Activated CD4-positive, alpha-beta memory T cell treated with anti-CD3 and anti-CD28 coated beads, Interleukin-2, amount 10 ng/mL, durations not matched to agents 7 days and 5 days (primary cell): ENCODE measurements at regions of chr17 and their contacts with region 1.

Region 1: DNA sequence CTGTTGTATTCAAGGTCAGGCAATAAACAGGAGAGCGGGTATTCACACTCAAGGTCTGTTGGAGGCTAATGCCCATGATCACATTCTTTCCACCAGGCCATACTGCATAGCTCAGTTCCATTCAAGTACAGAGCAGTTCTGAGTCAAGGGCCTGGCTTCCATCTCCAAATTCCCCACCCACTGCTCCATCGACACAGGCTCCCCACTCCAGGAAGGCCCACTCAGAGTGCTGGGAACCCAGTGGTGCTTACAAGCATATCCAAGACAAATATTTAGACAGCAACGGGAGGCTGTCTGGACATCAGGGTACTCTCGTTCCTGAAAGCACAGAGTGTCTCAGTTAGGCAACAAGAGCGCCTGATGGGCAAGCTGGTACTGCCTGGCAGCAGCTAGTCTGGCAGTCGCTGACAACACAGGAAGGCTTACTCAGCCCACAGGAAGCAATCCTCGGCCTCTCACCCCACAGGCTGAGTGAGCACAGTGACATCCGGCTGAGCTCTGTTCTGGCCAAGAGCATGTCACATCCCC is 40.9 kb downstream of the RFFL start:
- DNase-seq: peak; percentile 86
- H3K4me3 Mint-ChIP-seq: peak overlapping the region; percentile 70
- H3K27ac Mint-ChIP-seq: peak overlapping the region; percentile 98
- H3K4me1 Mint-ChIP-seq: peaks cover 60% of the 10 kb centered on the region
- H3K27me3 Mint-ChIP-seq: no peaks in the 10 kb centered on the region

Region 2: DNA sequence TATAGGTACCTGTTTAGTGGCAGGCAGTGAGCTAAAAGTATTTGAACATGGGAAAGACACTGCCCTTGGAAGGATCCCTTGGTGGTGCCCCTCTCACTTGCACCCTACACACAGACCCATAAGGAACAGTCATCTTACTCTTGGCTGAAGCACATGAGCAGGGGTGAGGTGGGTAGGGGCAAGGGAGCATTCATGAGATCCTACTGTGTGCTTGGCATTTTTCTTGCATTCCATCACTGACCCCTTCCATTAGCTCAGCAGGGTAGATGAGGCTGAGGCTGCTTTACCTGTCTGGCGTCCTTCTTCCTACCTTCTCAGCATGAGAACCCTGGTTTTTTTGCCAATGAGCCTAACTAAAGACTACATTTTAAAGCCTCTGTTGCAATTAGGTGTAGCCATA is 109.6 kb before region 1 on chr17:
- CTCF ChIA-PET with region 1: no interaction called
- POLR2A ChIA-PET with region 1: no interaction called
- DNase-seq: no peak
- H3K4me3 Mint-ChIP-seq: no peak overlapping the region
- H3K27ac Mint-ChIP-seq: no peak overlapping the region
- H3K4me1 Mint-ChIP-seq: no peaks in the 10 kb centered on the region
- H3K27me3 Mint-ChIP-seq: peaks cover 2% of the 10 kb centered on the region

Region 3: DNA sequence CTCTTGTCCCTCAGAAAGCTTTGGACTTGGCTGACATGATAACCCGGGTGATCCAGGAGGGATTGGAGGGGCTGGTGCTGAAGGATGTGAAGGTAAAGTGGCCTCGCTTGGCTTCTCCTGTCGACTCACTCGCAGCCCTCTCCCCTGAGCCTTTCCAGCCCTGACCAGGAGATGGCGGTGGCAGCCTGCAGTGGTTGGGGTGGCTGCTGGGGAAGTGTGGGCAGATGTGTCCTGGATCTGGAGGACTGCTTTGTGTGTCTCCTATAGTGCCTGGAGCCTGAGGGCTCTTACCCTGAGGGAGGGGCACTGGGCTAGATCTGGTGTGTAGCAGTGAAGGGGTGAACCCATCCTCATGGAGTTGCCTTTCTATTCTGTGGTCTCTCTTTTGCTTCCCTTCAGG is 24.4 kb before region 1 on chr17:
- CTCF ChIA-PET with region 1: interaction called, 17 read pairs
- POLR2A ChIA-PET with region 1: interaction called, 13 read pairs
- DNase-seq: peak; percentile 87
- H3K4me3 Mint-ChIP-seq: no peak overlapping the region
- H3K27ac Mint-ChIP-seq: peak overlapping the region; percentile 65
- H3K4me1 Mint-ChIP-seq: peaks cover 9% of the 10 kb centered on the region
- H3K27me3 Mint-ChIP-seq: no peaks in the 10 kb centered on the region

Region 4: DNA sequence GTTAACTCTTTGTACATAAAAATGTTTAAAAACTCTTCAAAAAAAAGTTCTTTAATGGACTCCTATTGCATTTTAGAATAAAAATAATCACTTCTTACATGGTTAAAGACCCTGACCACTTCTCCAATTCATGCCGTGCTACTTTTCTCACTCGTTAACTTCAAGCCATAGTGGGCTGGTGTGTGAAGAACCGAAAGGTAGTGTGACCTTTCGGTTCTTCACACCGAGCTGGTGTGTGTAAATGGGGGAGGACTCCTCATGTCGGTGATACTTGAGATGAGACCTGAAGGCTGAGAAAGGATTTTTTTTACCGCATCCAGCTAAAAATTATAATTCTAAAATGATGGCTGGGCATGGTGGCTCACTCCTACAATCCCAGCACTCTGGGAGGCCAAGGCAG is 18.8 kb after region 1 on chr17:
- CTCF ChIA-PET with region 1: interaction called, 9 read pairs
- POLR2A ChIA-PET with region 1: interaction called, 51 read pairs
- DNase-seq: no peak
- H3K4me3 Mint-ChIP-seq: no peak overlapping the region
- H3K27ac Mint-ChIP-seq: no peak overlapping the region
- H3K4me1 Mint-ChIP-seq: peaks cover 24% of the 10 kb centered on the region
- H3K27me3 Mint-ChIP-seq: no peaks in the 10 kb centered on the region

Region 5: DNA sequence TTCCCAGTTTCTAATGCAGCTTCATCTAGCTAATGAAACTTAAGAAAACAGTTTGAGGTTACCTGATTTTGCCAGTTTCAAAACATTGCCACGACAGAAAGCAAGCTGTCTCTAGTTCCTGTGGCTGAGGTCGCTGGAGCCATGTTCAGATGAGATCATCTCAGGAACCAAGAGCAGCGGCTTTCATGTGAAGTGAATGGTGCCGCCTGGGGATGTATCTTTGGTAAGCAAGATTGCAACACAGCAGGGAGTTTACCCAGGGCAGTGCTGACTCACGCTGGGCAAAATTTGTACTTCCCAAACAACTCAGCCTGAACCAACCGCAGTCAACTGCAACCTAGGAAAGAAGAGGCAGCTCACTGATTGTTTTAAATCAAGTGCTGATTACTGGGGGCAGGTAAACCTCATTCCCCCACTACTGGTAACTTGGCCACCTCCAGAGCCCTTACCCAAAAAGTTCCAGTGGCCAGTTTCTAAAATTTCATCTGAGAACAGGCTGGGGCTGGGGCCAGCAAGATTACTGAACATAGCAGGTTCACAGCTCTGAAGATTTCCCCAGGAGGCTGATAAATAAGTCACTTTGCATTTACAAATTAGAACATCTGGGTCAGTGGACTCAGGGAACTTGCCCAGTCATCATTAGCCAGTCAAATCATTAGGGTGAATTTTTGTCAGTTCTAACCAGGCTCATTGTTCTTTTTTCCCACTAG is 41.1 kb after region 1 on chr17 and contains the start of gene RFFL:
- CTCF ChIA-PET with region 1: interaction called, 34 read pairs
- POLR2A ChIA-PET with region 1: interaction called, 62 read pairs
- DNase-seq: peak; percentile 91
- H3K4me3 Mint-ChIP-seq: peak within 1 kb of the TSS; percentile 48
- H3K27ac Mint-ChIP-seq: peak within 1 kb of the TSS; percentile 94
- H3K4me1 Mint-ChIP-seq: peaks cover 60% of the 10 kb centered on the region
- H3K27me3 Mint-ChIP-seq: no peaks in the 10 kb centered on the region
- total RNA-seq, gene RFFL: 47.3 to 53.9 TPM

Region 6: GRCh38 chr17:35082073-35082657 is 59.6 kb after region 1 on chr17:
- CTCF ChIA-PET with region 1: interaction called, 14 read pairs
- POLR2A ChIA-PET with region 1: interaction called, 56 read pairs
- DNase-seq: no peak
- H3K4me3 Mint-ChIP-seq: peak overlapping the region; percentile 34
- H3K27ac Mint-ChIP-seq: peak overlapping the region; percentile 87
- H3K4me1 Mint-ChIP-seq: peaks cover 85% of the 10 kb centered on the region
- H3K27me3 Mint-ChIP-seq: no peaks in the 10 kb centered on the region

Region 7: DNA sequence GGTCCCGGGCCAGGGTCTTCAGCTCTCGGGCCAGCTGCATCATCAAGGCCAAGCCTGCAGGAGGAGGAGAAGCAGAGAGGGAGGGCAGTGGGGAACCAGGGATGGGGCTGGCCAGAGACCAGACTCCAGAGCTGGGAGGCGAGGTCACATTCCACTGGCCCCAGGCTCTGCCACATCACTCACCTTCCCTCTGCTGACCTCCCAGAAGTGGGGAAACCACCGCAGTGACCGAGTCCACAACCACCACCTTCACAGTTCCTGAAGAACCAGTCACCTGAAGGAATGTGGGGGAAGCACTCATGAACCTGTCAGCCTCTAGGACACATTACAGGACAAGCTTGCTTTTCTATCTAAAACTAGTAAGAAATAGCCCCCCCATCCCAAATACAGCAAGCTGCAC is 80.7 kb after region 1 on chr17:
- CTCF ChIA-PET with region 1: no interaction called
- POLR2A ChIA-PET with region 1: no interaction called
- DNase-seq: no peak
- H3K4me3 Mint-ChIP-seq: no peak overlapping the region
- H3K27ac Mint-ChIP-seq: no peak overlapping the region
- H3K4me1 Mint-ChIP-seq: peaks cover 5% of the 10 kb centered on the region
- H3K27me3 Mint-ChIP-seq: no peaks in the 10 kb centered on the region

Region 8: DNA sequence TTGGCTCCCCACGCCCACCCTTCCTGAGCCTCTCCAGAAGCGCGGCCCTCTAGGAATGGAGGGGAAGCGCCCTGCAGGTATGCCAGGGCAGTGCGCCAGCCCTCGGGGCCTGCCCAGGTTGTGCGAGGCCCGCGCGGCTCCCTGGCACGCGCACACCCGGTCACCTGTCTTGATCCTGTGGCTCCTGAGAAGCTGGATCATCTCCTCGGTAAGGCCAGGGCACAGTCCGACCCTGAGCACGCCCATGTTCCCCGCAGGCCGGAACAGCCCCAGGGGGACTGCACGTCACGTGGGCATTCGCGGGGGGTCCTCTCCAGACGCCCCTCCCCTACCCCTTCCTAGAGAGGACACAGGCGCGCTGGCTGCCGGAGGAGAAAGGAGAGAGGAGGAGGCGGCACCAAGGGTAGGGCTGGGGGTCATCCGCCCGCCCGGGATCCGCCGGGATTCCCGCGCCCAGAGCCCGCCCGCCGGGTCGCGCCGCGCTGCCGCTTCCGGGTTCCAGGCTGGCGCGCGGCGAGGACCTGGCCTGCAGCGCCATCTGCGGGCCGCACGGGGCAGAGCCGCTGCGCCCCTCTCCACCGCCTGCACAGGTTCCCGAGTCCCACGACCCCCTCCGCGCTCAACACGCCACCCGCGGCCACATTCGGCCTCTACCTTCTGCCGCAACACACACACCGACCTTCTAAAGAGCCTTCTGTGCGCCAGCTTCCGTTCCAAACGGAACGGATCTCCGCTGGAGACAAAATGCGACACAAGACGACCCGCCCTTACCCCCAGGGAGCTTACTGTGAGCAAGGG is 97.0 kb after region 1 on chr17 and contains the start of gene RAD51D:
- CTCF ChIA-PET with region 1: interaction called, 17 read pairs
- POLR2A ChIA-PET with region 1: interaction called, 16 read pairs
- DNase-seq: peak; percentile 83
- H3K4me3 Mint-ChIP-seq: peak within 1 kb of the TSS; percentile 79
- H3K27ac Mint-ChIP-seq: peak within 1 kb of the TSS; percentile 78
- H3K4me1 Mint-ChIP-seq: peaks cover 41% of the 10 kb centered on the region
- H3K27me3 Mint-ChIP-seq: no peaks in the 10 kb centered on the region
- total RNA-seq, gene RAD51D: 25.6 to 25.9 TPM

Region 9: DNA sequence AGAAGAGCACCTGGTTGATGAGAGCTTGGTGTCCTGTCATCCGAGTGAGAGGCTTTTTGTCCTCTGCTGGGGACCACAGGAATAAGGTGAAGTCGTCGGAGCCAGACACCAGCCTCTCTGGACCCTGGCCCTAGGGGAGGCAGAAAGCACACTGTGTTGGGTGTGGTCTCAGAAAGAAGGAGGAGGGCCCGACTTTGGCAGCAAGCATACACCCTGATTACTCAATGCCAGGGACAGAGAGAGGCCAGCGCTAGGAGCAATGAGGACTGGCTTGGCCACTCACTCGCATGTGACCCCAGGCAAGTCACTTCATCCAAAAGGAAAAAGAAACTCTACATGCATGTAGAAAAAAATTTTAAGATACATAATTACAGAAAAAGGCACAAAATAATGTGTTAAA is 112.7 kb after region 1 on chr17:
- CTCF ChIA-PET with region 1: no interaction called
- POLR2A ChIA-PET with region 1: no interaction called
- DNase-seq: no peak
- H3K4me3 Mint-ChIP-seq: no peak overlapping the region
- H3K27ac Mint-ChIP-seq: no peak overlapping the region
- H3K4me1 Mint-ChIP-seq: peaks cover 9% of the 10 kb centered on the region
- H3K27me3 Mint-ChIP-seq: no peaks in the 10 kb centered on the region